Activated T-helper 1 cell treated with anti-CD3 and anti-CD28 coated beads, Interleukin-12 subunit alpha, Interleukin-12 subunit beta, Interleukin-2, Interleukin-4 antibody, amounts not matched to agents 30 ng/mL and 10 ng/mL and 1 ng/mL, durations not matched to agents 14 hours and 24 hours and 36 hours (primary cell): ENCODE measurements at regions of chr19 and their contacts with region 1.

Region 1: DNA sequence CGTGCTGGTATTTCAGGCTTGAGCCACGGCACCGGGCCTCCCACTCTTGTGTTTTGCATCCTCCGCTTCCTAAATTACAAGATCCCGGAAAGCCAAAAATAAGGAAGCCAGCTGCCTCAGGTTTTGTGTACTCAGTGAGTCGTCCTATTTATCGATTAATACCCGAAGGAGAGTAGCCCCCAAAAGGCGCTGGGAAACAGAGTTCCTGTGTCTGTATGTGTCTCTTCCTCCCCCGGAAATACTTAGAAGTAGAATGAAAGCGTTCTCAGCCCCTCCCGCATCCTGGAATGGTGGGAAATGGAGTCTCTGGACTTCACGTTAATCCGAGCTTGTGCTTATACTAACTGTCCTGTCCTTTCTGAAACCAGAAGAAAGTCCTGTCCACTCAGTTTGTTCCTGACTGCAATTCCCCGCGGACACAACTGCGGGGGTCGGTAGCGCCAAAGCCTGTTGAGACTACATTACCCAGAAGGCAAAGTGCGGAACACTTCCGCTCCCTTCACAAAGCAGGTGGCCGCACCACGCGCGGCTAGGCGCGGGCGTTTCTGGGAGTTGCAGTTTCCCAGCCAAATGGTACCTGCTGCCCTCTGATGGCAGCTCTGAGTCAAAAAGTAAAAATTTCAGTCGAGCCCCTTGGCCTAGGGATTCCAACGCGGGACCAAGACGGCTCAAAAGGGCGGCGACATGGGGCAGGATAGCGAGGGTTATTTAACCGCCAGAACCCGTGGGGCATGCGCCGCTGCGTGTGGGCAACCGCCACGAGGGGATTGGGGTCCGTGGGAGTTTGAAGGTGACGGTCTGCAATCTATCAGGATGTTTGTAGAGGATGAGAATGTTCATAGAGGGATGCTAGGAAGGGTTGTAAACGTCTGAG is 2.2 kb upstream of the GSK3A start:
- DNase-seq: peak; percentile 89
- H3K4me3 Mint-ChIP-seq: peak overlapping the region; percentile 92
- H3K27ac Mint-ChIP-seq: peak overlapping the region; percentile 91
- H3K4me1 Mint-ChIP-seq: peaks cover 50% of the 10 kb centered on the region
- H3K27me3 Mint-ChIP-seq: no peaks in the 10 kb centered on the region

Region 2: GRCh38 chr19:41859618-41860418 is 384.8 kb before region 1 on chr19 and contains the start of gene RPS19:
- intact Hi-C with region 1: loop called (anchors 1 kb)
- DNase-seq: peak; percentile 97
- H3K4me3 Mint-ChIP-seq: peak within 1 kb of the TSS; percentile 95
- H3K27ac Mint-ChIP-seq: peak within 1 kb of the TSS; percentile 97
- H3K4me1 Mint-ChIP-seq: peaks cover 39% of the 10 kb centered on the region
- H3K27me3 Mint-ChIP-seq: peaks cover 9% of the 10 kb centered on the region
- total RNA-seq, gene RPS19: 2,887 and 2,906 TPM in 2 replicates

Region 3: GRCh38 chr19:42121656-42122069 is 122.9 kb before region 1 on chr19:
- intact Hi-C with region 1: loop called (anchors 2 kb)
- DNase-seq: peak; percentile 74
- H3K4me3 Mint-ChIP-seq: peak overlapping the region; percentile 78
- H3K27ac Mint-ChIP-seq: peak overlapping the region; percentile 97
- H3K4me1 Mint-ChIP-seq: peaks cover 42% of the 10 kb centered on the region
- H3K27me3 Mint-ChIP-seq: no peaks in the 10 kb centered on the region

Region 4: GRCh38 chr19:42199440-42200115 is 45.0 kb before region 1 on chr19:
- intact Hi-C with region 1: loop called (anchors 1 kb)
- DNase-seq: peak; percentile 75
- H3K4me3 Mint-ChIP-seq: peak overlapping the region; percentile 77
- H3K27ac Mint-ChIP-seq: peak overlapping the region; percentile 92
- H3K4me1 Mint-ChIP-seq: peaks cover 83% of the 10 kb centered on the region
- H3K27me3 Mint-ChIP-seq: no peaks in the 10 kb centered on the region

Region 5: GRCh38 chr19:42268704-42269477 is 24.3 kb after region 1 on chr19 and contains the start of gene CIC:
- intact Hi-C with region 1: loop called (anchors 1 kb)
- DNase-seq: peak; percentile 99
- H3K4me3 Mint-ChIP-seq: no peak within 1 kb of the TSS
- H3K27ac Mint-ChIP-seq: peak within 1 kb of the TSS; percentile 99
- H3K4me1 Mint-ChIP-seq: peaks cover 30% of the 10 kb centered on the region
- H3K27me3 Mint-ChIP-seq: no peaks in the 10 kb centered on the region
- total RNA-seq, gene CIC: 66.9 and 68.0 TPM in 2 replicates

Region 6: DNA sequence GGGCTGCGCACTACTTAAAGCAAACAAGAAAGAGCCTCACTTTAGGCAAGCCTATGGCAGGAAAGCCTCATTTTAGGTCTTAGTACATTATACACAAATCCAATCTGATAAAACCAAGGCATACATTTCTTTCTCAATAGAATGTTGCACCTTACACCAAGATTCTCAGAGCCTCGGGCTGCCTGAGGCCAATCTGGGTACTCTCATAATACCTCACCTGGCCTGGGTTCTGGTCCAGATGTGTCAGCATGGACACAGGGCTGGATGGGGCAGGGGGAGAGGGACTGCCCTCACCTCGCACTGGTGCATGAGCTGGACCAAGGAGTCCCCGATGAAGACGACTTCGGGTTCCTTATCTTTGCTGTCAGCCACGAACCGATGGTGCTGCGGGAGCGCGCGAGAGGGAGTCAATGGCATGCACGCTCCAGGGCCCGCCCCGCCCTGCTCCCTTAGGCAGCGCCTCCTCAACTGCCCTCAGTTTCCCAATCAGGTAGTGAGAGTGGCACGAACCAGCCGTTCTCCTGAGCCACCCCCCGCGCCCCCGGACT is 57.1 kb after region 1 on chr19 and contains the start of gene PRR19:
- intact Hi-C with region 1: loop called (anchors 1 kb)
- DNase-seq: no peak
- H3K4me3 Mint-ChIP-seq: peak within 1 kb of the TSS; percentile 88
- H3K27ac Mint-ChIP-seq: peak within 1 kb of the TSS; percentile 89
- H3K4me1 Mint-ChIP-seq: peaks cover 14% of the 10 kb centered on the region
- H3K27me3 Mint-ChIP-seq: peaks cover 2% of the 10 kb centered on the region
- total RNA-seq, gene PRR19: 1.0 and 1.4 TPM in 2 replicates

Region 7: GRCh38 chr19:42919511-42920021 is 675.0 kb after region 1 on chr19:
- intact Hi-C with region 1: no loop called
- DNase-seq: no peak
- H3K4me3 Mint-ChIP-seq: no peak overlapping the region
- H3K27ac Mint-ChIP-seq: no peak overlapping the region
- H3K4me1 Mint-ChIP-seq: no peaks in the 10 kb centered on the region
- H3K27me3 Mint-ChIP-seq: no peaks in the 10 kb centered on the region